ENCODE measurements at regions of chr5 and their contacts with region 1.

Region 1: DNA sequence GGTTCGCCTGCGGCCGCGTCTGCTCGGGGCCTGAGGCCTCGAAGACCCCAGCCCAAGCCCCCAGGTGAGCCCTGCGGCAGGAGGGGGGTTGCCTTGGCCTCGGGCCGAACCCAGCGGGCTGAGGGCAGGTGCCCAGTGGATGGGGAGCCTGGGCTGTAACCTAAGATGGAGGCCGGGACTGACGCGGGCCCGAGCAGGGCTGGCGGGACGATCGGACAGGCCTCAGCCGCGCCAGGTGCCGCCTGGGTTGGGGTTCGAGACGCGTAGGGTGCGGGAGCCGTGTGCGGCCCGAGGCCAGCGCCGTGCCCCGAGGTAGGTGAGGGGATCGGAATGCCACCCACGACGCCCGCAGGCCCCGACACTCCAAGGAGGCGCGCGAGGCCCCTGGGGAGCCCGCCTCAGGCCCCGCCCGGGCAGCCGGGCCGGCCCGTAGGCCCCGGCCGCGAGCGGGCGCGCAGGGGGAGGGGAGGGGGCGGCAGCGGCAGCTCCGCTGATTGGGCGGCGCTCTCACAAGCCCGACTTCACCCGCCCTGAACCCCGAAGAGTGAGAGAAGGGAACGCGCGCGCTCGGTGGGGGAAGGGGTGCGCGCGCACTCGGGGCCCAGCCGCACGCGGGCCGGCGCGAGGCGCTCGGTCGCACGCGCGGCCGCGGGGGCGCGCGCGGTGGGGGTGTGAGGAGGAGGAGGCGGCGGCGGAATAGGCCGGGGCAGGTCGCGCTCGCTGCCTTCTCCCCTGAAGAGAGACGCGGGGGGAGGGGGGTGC is at the start of gene NSD1:
- DNase-seq: peak; percentile 91
- H3K4me3 Mint-ChIP-seq: peak within 1 kb of the TSS; percentile 88
- H3K27ac Mint-ChIP-seq: peak within 1 kb of the TSS; percentile 83
- H3K4me1 Mint-ChIP-seq: peaks cover 36% of the 10 kb centered on the region
- H3K27me3 Mint-ChIP-seq: no peaks in the 10 kb centered on the region
- total RNA-seq, gene NSD1: 100.0 and 103 TPM in 2 replicates

Region 2: DNA sequence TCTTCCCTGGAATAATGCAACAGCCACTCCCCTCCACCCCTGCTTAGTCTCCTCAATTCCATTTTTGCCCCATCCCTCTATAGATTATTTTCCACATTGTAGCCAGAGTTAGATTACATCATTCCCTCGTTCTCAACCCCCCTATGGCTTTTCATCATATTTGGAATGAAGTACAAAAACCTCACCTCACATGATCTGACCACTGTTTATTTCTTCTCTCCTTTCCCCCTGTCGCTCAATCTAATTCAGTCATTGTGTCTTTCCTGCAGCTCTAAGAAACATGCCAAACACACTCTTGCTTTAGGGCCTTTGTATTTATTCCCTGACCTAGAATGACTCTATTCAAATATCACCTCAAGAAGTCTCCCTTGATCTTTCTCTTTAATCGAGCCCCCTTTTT is 211.6 kb before region 1 on chr5:
- intact Hi-C with region 1: no loop called
- DNase-seq: no peak
- H3K4me3 Mint-ChIP-seq: no peak overlapping the region
- H3K27ac Mint-ChIP-seq: no peak overlapping the region
- H3K4me1 Mint-ChIP-seq: peaks cover 3% of the 10 kb centered on the region
- H3K27me3 Mint-ChIP-seq: no peaks in the 10 kb centered on the region

Region 3: DNA sequence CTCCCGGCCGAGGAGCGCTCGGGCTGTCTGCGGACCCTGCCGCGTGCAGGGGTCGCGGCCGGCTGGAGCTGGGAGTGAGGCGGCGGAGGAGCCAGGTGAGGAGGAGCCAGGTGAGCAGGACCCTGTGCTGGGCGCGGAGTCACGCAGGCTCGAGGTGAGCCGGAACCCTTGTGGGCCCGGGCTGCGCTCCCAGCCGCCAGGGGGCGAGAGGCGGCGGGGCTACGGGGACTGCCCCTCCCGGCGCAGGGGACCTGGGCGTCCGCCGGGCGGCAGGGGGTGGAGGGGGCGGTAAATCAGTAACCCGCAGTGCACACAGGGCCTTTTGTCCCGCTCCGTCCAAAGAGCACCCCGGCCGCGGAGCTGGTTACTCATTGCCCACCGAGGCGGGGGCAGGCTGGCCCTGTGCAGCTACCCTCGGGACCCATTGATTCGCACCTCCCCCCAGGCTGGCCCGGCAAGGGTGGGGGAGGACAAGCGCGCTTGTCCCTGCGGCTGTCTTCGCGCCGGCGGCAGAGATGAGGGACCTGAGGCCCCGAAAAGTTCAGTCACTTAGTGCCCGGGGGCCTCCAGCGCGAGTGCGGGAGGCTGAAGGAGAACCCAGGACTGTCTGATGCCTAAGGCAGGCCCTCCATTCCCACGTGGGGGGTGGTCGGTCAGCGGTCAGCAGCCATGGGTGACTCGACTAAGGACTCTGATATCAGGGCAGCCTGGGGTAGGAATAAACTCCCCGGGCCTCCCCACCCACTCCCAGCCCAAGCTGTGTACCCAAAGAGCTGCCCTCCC is 46.2 kb before region 1 on chr5:
- intact Hi-C with region 1: loop called (anchors 1 kb)
- DNase-seq: peak; percentile 54
- H3K4me3 Mint-ChIP-seq: no peak overlapping the region
- H3K27ac Mint-ChIP-seq: no peak overlapping the region
- H3K4me1 Mint-ChIP-seq: peaks cover 5% of the 10 kb centered on the region
- H3K27me3 Mint-ChIP-seq: peaks cover 29% of the 10 kb centered on the region

Region 4: GRCh38 chr5:177303121-177303924 is 170.1 kb after region 1 on chr5 and contains the starts of genes PRELID1 and RAB24:
- intact Hi-C with region 1: loop called (anchors 5 kb)
- DNase-seq: peak; percentile 86
- H3K4me3 Mint-ChIP-seq: peak within 1 kb of the TSS; percentile 97
- H3K27ac Mint-ChIP-seq: peak within 1 kb of the TSS; percentile 87
- H3K4me1 Mint-ChIP-seq: peaks cover 56% of the 10 kb centered on the region
- H3K27me3 Mint-ChIP-seq: no peaks in the 10 kb centered on the region
- total RNA-seq, gene PRELID1: 223 and 229 TPM in 2 replicates
- total RNA-seq, gene RAB24: 17.7 and 19.0 TPM in 2 replicates